Colonic mucosa (tissue), 4 donors: ENCODE measurements at regions of chr6 and their contacts with region 1.

Region 1: GRCh38 chr6:105981002-105981887 is 104.9 kb upstream of the PRDM1 start:
- DNase-seq: peak; percentile 34
- H3K4me3 ChIP-seq: peak overlapping the region; percentile 23
- H3K27ac ChIP-seq: no peak overlapping the region
- H3K4me1 ChIP-seq: no peaks in the 10 kb centered on the region
- H3K27me3 ChIP-seq: no peaks in the 10 kb centered on the region
- CTCF ChIP-seq: no peak

Region 2: GRCh38 chr6:104940881-104941728 is 1040.1 kb before region 1 on chr6:
- intact Hi-C with region 1: no loop called
- DNase-seq: peak; percentile 29
- H3K4me3 ChIP-seq: peak overlapping the region; percentile 3
- H3K27ac ChIP-seq: no peak overlapping the region
- H3K4me1 ChIP-seq: no peaks in the 10 kb centered on the region
- H3K27me3 ChIP-seq: peaks cover 12% of the 10 kb centered on the region
- CTCF ChIP-seq: no peak

Region 3: DNA sequence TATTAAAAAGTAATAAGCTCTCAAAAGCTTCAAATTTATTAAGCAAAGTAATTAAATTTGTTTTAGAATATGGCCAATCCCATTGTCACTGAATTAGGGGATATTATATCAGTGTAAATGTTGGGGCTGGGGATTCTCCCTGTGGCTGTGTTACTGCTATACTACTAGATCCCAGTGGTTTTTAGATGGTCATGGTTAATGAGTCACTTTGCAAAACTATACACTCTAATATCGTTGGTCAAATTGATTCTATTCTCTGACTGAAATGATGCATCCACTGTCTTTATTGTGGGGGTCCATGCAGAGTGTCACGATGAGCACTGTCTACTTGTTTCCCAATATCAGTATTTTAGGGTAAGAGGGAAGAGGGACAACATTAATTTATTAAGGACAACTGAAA is 241.5 kb before region 1 on chr6:
- intact Hi-C with region 1: loop called (anchors 5 kb)
- DNase-seq: no peak
- H3K4me3 ChIP-seq: no peak overlapping the region
- H3K27ac ChIP-seq: no peak overlapping the region
- H3K4me1 ChIP-seq: no peaks in the 10 kb centered on the region
- H3K27me3 ChIP-seq: no peaks in the 10 kb centered on the region
- CTCF ChIP-seq: no peak

Region 4: GRCh38 chr6:105880030-105880492 is 101.2 kb before region 1 on chr6:
- intact Hi-C with region 1: no loop called
- DNase-seq: no peak
- H3K4me3 ChIP-seq: no peak overlapping the region
- H3K27ac ChIP-seq: no peak overlapping the region
- H3K4me1 ChIP-seq: no peaks in the 10 kb centered on the region
- H3K27me3 ChIP-seq: no peaks in the 10 kb centered on the region
- CTCF ChIP-seq: no peak

Region 5: DNA sequence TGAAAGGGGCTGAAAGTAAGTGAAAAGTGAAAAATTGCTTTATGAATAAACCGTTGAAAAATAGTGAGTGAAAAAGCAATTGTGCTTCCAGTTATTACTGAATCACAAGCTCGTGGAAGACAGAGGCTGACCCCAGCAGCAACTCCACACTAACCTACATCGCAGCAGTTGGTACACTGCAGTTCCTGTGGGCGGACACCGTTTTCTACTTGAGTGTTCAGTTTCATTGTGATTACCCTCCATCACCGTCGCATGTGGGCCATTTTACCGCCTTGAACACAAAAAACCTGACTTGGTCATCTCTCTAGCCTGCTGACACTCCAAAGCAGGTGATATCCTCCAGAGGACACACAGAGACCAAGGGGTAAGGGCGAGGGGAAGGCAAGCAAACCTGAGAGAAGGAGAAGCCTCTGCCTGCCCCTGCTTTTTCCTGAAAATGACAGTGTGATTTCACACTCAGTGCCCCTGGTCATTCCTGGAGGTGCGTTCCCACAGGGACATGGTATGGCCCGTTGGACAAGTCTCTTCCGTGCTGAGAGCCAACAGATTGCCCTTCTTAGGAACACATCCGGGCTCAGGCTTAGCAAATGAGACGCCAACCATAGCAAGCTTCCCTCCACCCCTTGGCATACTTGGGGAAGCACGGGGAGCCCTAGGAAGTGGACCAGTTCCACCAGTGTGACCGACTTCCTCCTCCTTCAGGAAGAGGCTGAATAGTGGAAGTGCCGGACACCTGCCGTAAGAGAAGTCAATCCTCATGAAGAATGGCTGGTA is 133.4 kb after region 1 on chr6:
- intact Hi-C with region 1: no loop called
- DNase-seq: no peak
- H3K4me3 ChIP-seq: no peak overlapping the region
- H3K27ac ChIP-seq: no peak overlapping the region
- H3K4me1 ChIP-seq: peaks cover under 1% of the 10 kb centered on the region
- H3K27me3 ChIP-seq: no peaks in the 10 kb centered on the region
- CTCF ChIP-seq: no peak

Region 6: GRCh38 chr6:106519460-106520394 is 538.5 kb after region 1 on chr6:
- intact Hi-C with region 1: no loop called
- DNase-seq: no peak
- H3K4me3 ChIP-seq: no peak overlapping the region
- H3K27ac ChIP-seq: peak overlapping the region; percentile 67
- H3K4me1 ChIP-seq: peaks cover 10% of the 10 kb centered on the region
- H3K27me3 ChIP-seq: no peaks in the 10 kb centered on the region
- CTCF ChIP-seq: no peak